ENCODE measurements at regions of chr3 and their contacts with region 1.

Region 1: DNA sequence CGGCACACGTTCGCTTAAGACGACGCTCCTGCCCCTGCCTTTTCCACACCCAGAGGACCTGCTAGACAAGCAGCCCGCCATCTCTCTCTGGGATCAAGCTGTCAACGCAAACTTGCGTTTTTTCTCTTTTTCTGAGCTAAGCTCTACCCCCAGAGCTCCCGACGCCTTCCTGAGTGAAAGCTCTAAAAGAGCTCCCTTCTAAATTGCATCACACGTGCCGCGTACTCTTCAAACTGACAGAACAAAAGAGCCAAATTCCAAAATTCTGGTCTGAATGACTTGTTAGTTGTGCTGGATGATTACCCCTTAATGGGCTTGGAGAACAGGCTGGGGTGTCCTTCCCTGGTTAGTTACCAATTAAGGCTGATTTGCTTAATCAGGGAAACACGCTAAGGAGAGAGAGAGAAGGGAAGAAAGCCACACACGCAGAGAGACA is 81.2 kb downstream of the MDFIC2 start:
- DNase-seq: no peak
- H3K4me3 ChIP-seq: no peak overlapping the region
- H3K27ac ChIP-seq: no peak overlapping the region
- H3K4me1 ChIP-seq: no peaks in the 10 kb centered on the region
- H3K27me3 ChIP-seq: peaks cover 6% of the 10 kb centered on the region; the same call in 1 of the 2 replicates
- CTCF ChIP-seq: no peak

Region 2: DNA sequence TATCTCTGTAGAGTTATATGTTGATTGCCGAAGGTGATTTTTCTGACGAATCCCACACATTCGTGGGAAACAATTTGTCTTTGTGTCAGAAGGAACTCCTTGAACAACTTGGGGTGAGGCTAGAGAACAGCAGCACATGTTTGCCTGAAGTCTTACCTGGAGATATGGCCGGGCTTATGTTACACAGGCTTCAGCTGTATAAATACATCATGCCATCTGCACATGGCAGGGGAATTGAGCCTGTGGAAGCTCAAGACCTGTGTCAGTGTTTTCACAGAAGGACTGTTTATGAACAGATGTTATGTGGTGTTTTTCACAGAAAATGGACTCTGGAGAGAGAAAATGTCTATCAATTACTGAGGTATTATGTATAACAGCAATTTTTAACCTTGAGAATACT is 284.8 kb after region 1 on chr3:
- CTCF ChIA-PET with region 1: no interaction called
- POLR2A ChIA-PET with region 1: interaction called, 18 read pairs
- intact Hi-C with region 1: no loop called
- DNase-seq: no peak
- H3K4me3 ChIP-seq: no peak overlapping the region
- H3K27ac ChIP-seq: no peak overlapping the region
- H3K4me1 ChIP-seq: no peaks in the 10 kb centered on the region
- H3K27me3 ChIP-seq: no peaks in the 10 kb centered on the region; the same call in 1 of the 2 replicates
- CTCF ChIP-seq: no peak

Region 3: GRCh38 chr3:71397046-71397445 is 1165.8 kb after region 1 on chr3:
- CTCF ChIA-PET with region 1: no interaction called
- POLR2A ChIA-PET with region 1: no interaction called
- intact Hi-C with region 1: no loop called
- DNase-seq: no peak
- H3K4me3 ChIP-seq: no peak overlapping the region
- H3K27ac ChIP-seq: no peak overlapping the region
- H3K4me1 ChIP-seq: no peaks in the 10 kb centered on the region
- H3K27me3 ChIP-seq: no peaks in the 10 kb centered on the region
- CTCF ChIP-seq: peak; percentile 58

Measured in PC-9 (cell line).